Mammary epithelial cell (primary cell): ENCODE measurements at regions of chr19 and their contacts with region 1.

Region 1: GRCh38 chr19:16714702-16715287 is 4.9 kb upstream of the NWD1 start:
- DNase-seq: peak; percentile 44
- H3K4me3 ChIP-seq: no peak overlapping the region
- H3K27ac ChIP-seq: no peak overlapping the region
- H3K4me1 ChIP-seq: peaks cover 17% of the 10 kb centered on the region
- H3K27me3 ChIP-seq: no peaks in the 10 kb centered on the region
- CTCF ChIP-seq: peak; percentile 84 to 96

Region 2: GRCh38 chr19:16702118-16702517 is 12.7 kb before region 1 on chr19:
- CTCF ChIA-PET with region 1: interaction called, 13 read pairs
- dilution Hi-C with region 1: no loop called
- in situ Hi-C with region 1: no loop called
- intact Hi-C with region 1: no loop called
- DNase-seq: peak; percentile 99
- H3K4me3 ChIP-seq: no peak overlapping the region
- H3K27ac ChIP-seq: peak overlapping the region; percentile 42
- H3K4me1 ChIP-seq: peaks cover 7% of the 10 kb centered on the region
- H3K27me3 ChIP-seq: no peaks in the 10 kb centered on the region
- CTCF ChIP-seq: no peak

Region 3: DNA sequence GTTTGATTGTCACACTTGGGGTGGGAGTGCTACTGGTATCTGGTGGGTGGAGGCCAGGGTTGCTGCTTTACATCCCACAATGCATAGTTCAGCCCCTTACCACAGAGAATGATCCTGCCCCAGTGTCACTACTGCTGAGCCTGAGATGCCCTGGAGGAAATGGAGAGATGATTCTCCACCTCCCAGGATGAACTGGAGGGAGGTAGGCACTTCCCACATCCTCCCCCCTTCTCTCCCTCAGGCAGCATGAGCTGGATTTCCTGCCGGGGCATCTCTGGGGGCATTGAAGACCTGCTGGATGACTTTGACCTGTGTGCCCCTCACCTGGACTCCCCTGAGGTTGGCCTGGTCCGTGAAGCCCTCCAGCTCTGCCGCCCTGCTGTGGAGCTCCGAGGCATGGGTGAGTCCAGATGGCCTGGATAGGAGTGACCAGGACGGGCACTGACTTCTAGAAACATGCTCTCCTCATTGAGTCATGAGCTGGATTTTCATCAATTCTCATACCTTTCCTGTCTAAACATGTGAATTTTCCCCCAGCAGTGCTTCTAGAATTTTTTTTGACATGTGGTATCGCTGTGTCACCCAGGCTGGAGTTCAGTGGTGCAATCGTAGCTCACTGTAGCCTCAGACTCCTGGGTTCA is 50.1 kb after region 1 on chr19:
- CTCF ChIA-PET with region 1: interaction called, 4 read pairs
- dilution Hi-C with region 1: no loop called
- in situ Hi-C with region 1: loop called in 1 of 2 experiments (anchors 10 kb)
- intact Hi-C with region 1: no loop called
- DNase-seq: peak; percentile 95
- H3K4me3 ChIP-seq: peak overlapping the region in 2 of 3 experiments; percentile 34 to 53
- H3K27ac ChIP-seq: peak overlapping the region; percentile 65
- H3K4me1 ChIP-seq: peaks cover 15% of the 10 kb centered on the region
- H3K27me3 ChIP-seq: no peaks in the 10 kb centered on the region
- CTCF ChIP-seq: no peak

Region 4: DNA sequence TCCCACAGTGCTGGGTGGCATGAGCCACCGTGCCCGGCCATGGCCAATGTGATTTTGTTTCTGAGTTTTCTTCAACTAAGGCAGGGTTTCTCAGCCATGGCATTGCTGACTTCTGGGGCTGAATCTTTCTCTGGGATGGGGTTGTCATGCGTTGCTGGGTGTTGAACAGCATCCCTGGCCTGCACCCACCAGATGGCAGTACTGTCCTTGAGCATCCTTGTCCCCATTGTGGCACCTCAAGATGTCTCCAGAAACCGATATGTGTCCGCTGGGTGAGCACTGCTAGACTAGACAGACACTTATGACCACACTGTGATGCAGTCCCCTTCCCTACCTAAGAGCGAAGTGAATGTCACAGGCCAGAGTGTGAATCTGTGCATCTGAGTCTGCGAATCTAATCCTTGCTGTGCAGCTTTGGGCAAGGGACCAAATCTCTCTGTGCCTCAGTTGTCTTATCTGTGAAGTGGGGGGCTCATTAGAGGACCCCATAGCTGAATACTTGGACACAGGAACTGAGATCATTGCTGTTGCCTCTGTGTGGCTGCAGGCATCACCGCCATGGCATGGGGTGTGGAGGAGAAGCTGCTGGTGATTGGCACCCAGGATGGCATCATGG is 64.1 kb after region 1 on chr19:
- CTCF ChIA-PET with region 1: no interaction called
- dilution Hi-C with region 1: no loop called
- in situ Hi-C with region 1: no loop called
- intact Hi-C with region 1: loop called (anchors 1 kb)
- DNase-seq: peak; percentile 40
- H3K4me3 ChIP-seq: no peak overlapping the region
- H3K27ac ChIP-seq: no peak overlapping the region
- H3K4me1 ChIP-seq: no peaks in the 10 kb centered on the region
- H3K27me3 ChIP-seq: no peaks in the 10 kb centered on the region
- CTCF ChIP-seq: peak; percentile 58 to 87

Region 5: GRCh38 chr19:16836115-16837034 is 121.6 kb after region 1 on chr19:
- CTCF ChIA-PET with region 1: no interaction called
- dilution Hi-C with region 1: no loop called
- in situ Hi-C with region 1: no loop called
- intact Hi-C with region 1: loop called (anchors 2 kb)
- DNase-seq: peak; percentile 54
- H3K4me3 ChIP-seq: no peak overlapping the region
- H3K27ac ChIP-seq: peak overlapping the region; percentile 8
- H3K4me1 ChIP-seq: peaks cover 18% of the 10 kb centered on the region
- H3K27me3 ChIP-seq: no peaks in the 10 kb centered on the region
- CTCF ChIP-seq: peak in 1 of 2 donors; percentile 26

Region 6: DNA sequence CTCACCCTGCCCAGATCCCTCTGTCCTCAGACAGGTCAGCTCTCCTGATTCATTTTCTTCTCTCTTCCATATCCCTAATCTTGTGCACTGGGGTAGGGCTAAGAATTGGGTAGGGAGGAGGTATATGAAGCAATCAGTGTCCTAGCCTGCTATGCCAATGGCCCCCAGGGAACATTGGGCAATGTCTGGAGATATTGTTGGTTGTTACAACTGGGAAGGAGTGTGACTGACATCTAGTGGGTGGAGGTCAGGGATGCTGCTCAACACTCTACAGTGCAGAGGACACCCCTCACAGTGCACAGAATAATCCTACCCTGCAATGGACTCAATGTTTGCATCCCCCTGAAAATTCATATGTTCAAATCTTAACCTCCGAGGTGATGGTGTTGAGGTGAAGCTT is 254.3 kb after region 1 on chr19:
- CTCF ChIA-PET with region 1: no interaction called
- dilution Hi-C with region 1: no loop called
- in situ Hi-C with region 1: no loop called
- intact Hi-C with region 1: loop called (anchors 1 kb)
- DNase-seq: peak; percentile 45
- H3K4me3 ChIP-seq: no peak overlapping the region
- H3K27ac ChIP-seq: no peak overlapping the region
- H3K4me1 ChIP-seq: no peaks in the 10 kb centered on the region
- H3K27me3 ChIP-seq: no peaks in the 10 kb centered on the region
- CTCF ChIP-seq: peak; percentile 46 to 80